Activated CD4-positive, alpha-beta T cell treated with anti-CD3 and anti-CD28 coated beads, Interleukin-2, amount 10 ng/mL, durations not matched to agents 7 days and 5 days (primary cell): ENCODE measurements at regions of chr17 and their contacts with region 1.

Region 1: GRCh38 chr17:7296189-7296902 is 1.9 kb upstream of the YBX2 start:
- DNase-seq: peak; percentile 62
- H3K4me3 Mint-ChIP-seq: peak overlapping the region; percentile 19
- H3K27ac Mint-ChIP-seq: no peak overlapping the region
- H3K4me1 Mint-ChIP-seq: peaks cover 26% of the 10 kb centered on the region
- H3K27me3 Mint-ChIP-seq: peaks cover 42% of the 10 kb centered on the region

Region 2: GRCh38 chr17:7219812-7220581 is 76.3 kb before region 1 on chr17 and contains the starts of genes ACADVL and DLG4:
- CTCF ChIA-PET with region 1: interaction called, 48 read pairs
- POLR2A ChIA-PET with region 1: no interaction called
- DNase-seq: peak; percentile 74
- H3K4me3 Mint-ChIP-seq: peak within 1 kb of the TSS; percentile 91
- H3K27ac Mint-ChIP-seq: peak within 1 kb of the TSS; percentile 89
- H3K4me1 Mint-ChIP-seq: peaks cover 56% of the 10 kb centered on the region
- H3K27me3 Mint-ChIP-seq: no peaks in the 10 kb centered on the region
- total RNA-seq, gene ACADVL: 338 to 370 TPM
- total RNA-seq, gene DLG4: 9.4 to 9.5 TPM

Region 3: DNA sequence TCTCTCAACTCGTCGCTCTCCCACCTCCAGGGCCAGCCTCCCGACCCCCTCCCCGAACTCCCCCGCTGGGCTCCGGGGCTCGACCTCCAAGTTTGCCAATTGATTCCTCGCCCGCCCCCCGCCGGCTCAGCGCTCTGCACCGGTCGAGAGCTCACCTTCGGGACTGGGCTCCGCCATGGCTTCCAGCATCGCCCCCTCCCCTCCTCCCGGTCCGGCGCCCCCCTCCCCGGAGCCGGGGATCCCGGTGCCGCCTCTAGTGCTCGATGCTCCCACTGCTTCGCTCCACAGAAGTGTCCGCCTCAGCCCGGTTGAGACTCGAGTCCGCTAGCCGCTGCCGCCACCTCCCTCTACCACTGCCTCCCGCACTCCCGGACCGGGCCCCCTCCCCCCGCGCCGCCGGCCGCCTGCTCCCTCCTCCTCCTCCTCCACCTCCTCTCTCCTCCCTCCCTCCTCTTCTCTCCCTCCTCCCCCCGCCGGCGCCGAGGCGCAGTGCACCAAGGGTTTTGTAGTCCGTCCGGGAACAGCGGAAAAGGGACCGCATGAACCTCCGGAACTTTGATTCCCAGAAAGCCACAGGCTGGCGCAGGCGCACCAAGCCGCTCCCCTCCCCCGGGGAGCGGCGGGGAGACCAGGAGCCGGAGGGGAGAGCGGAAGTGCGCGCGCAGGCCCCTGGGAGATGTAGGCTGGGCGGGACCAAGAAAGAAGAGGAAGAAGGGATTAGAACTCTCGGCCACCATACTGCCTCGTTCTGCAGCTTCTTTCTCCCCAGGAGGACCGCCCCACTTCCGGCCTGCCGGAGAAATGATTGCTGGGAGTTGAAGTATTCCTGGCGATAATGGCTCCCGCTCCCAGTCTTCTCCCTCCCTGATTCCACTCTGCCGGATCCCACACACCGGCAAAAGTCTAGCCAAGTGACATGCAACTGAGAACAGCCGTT is 57.0 kb before region 1 on chr17 and contains the start of gene PHF23:
- CTCF ChIA-PET with region 1: interaction called, 14 read pairs
- POLR2A ChIA-PET with region 1: no interaction called
- DNase-seq: peak; percentile 98
- H3K4me3 Mint-ChIP-seq: peak within 1 kb of the TSS; percentile 87
- H3K27ac Mint-ChIP-seq: peak within 1 kb of the TSS; percentile 93
- H3K4me1 Mint-ChIP-seq: peaks cover 68% of the 10 kb centered on the region
- H3K27me3 Mint-ChIP-seq: no peaks in the 10 kb centered on the region
- total RNA-seq, gene PHF23: 55.9 to 59.2 TPM

Region 4: DNA sequence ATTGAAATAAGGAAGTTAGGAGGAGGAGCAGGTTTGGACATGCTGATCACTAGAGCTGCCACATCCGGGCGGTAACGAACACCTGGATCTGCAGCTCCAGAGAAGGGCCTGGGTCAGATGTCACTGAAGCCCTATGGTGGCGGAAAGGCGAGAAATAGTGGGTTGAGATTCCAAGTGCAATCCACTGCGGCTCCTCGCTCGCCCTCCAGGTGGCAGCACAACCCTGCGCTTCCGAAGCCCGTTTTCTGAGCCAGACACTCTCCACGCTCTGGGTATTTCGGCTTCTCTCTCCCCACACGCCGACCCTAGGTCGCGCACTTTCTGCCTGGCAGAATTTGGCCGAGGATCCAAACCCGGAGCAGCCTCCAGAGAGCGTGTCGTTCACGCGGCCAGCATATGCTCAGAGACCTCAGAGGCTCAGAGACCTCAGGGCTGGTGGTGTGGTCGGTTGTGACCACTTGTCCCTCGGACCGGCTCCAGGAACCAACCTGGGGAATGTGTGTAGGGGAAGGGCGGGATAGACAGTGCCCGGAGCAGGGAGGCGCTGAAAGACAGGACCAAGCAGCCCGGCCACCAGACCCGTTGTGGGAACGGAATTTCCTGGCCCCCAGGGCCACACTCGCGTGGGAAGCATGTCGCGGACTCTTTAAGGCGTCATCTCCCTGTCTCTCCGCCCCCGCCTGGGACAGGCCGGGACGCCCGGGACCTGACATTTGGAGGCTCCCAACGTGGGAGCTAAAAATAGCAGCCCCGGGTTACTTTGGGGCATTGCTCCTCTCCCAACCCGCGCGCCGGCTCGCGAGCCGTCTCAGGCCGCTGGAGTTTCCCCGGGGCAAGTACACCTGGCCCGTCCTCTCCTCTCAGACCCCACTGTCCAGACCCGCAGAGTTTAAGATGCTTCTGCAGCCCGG is 15.6 kb before region 1 on chr17:
- CTCF ChIA-PET with region 1: interaction called, 26 read pairs
- POLR2A ChIA-PET with region 1: no interaction called
- DNase-seq: peak; percentile 86
- H3K4me3 Mint-ChIP-seq: peak overlapping the region; percentile 57
- H3K27ac Mint-ChIP-seq: no peak overlapping the region
- H3K4me1 Mint-ChIP-seq: peaks cover 19% of the 10 kb centered on the region
- H3K27me3 Mint-ChIP-seq: peaks cover 22% of the 10 kb centered on the region

Region 5: GRCh38 chr17:7466639-7467341 is 170.4 kb after region 1 on chr17:
- CTCF ChIA-PET with region 1: no interaction called
- POLR2A ChIA-PET with region 1: no interaction called
- DNase-seq: no peak
- H3K4me3 Mint-ChIP-seq: no peak overlapping the region
- H3K27ac Mint-ChIP-seq: peak overlapping the region; percentile 54
- H3K4me1 Mint-ChIP-seq: peaks cover 21% of the 10 kb centered on the region
- H3K27me3 Mint-ChIP-seq: no peaks in the 10 kb centered on the region